Activated naive CD4-positive, alpha-beta T cell treated with anti-CD3 and anti-CD28 coated beads for 36 hours (primary cell): ENCODE measurements at regions of chr6 and their contacts with region 1.

Region 1: DNA sequence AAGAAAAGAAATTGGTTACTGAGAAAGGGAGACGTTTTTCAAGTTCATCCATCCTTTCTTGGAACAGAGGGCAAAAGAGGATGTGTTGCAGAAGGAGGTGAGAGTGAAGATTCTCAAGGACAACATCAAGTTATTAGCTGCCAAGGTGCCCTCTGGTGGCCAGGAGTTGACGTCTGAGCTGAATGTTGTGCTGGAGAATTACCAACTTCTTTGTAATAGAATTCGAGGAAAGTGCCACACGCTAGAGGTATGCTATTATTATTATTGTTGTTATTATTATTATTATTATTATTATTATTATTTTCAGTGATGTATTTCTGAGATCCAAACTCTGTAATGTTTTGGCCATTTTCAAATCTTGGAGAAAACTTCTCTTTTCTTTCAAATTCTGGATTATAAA is 197.0 kb downstream of the UTRN start:
- DNase-seq: peak; percentile 88
- H3K4me3 Mint-ChIP-seq: no peak overlapping the region
- H3K27ac Mint-ChIP-seq: no peak overlapping the region
- H3K4me1 Mint-ChIP-seq: peaks cover 3% of the 10 kb centered on the region
- H3K27me3 Mint-ChIP-seq: no peaks in the 10 kb centered on the region

Region 2: DNA sequence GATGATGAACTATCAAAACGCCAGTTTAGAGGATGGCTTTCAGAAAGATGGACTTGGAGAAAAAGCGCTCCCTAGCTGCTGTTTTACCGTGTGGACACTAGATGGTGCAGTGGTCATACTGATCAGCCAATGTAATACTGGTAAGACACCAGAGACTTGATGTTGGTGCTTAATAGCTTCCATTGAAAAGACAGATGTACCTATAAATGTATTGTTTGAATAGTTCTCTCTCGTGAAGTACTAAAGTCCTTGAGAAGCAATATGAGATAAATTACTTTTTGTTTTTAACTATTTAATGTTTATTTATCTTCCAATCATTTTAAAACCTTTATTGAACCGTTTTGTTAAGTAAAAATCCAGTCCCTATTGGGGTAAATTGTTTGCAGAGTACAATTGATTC is 906.7 kb before region 1 on chr6:
- CTCF ChIA-PET with region 1: no interaction called
- intact Hi-C with region 1: loop called (anchors 10 kb)
- DNase-seq: peak; percentile 69
- H3K4me3 Mint-ChIP-seq: no peak overlapping the region
- H3K27ac Mint-ChIP-seq: no peak overlapping the region
- H3K4me1 Mint-ChIP-seq: no peaks in the 10 kb centered on the region
- H3K27me3 Mint-ChIP-seq: no peaks in the 10 kb centered on the region

Region 3: GRCh38 chr6:144264270-144265060 is 217.7 kb before region 1 on chr6:
- CTCF ChIA-PET with region 1: interaction called, 7 read pairs
- intact Hi-C with region 1: loop called (anchors 1 kb)
- DNase-seq: no peak
- H3K4me3 Mint-ChIP-seq: no peak overlapping the region
- H3K27ac Mint-ChIP-seq: no peak overlapping the region
- H3K4me1 Mint-ChIP-seq: no peaks in the 10 kb centered on the region
- H3K27me3 Mint-ChIP-seq: no peaks in the 10 kb centered on the region

Region 4: GRCh38 chr6:144321839-144322591 is 160.1 kb before region 1 on chr6:
- CTCF ChIA-PET with region 1: no interaction called
- intact Hi-C with region 1: no loop called
- DNase-seq: no peak
- H3K4me3 Mint-ChIP-seq: no peak overlapping the region
- H3K27ac Mint-ChIP-seq: no peak overlapping the region
- H3K4me1 Mint-ChIP-seq: peaks cover 10% of the 10 kb centered on the region
- H3K27me3 Mint-ChIP-seq: no peaks in the 10 kb centered on the region

Region 5: DNA sequence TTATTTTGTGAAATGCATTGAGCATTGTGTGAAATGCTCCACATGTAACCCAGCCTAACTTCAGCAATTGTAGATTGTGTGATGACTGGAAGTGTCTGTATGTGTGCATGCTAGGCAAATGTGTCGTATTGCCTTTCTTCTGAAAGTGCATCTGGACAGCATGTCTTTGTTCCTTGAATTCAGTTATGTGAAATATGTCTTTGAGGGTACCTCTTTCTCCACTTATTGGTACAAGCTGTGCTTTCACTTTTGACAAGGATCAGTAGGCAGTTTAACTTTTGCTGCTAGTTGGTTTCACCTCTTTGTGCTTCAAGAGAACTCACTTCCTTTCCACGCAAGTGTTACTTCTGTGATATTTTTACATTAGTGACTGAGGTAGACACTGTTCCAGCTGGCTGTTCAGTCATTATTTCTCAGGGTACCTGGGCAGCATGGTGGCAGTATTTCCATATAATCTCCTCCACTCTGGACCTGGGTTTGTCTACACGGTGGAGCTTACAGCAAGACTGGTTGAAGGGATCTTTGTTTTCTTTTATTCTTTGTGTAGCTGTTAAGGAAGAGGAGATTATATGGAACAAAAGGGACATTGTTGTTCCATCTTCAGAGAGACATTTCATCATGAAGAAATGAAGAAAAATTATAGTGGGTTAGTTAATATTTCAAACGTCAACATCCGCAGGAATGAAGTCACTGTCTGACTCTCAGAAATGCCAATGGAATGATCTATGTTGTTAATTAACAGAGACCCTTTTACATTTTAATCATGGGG is 21.6 kb before region 1 on chr6:
- CTCF ChIA-PET with region 1: interaction called, 23 read pairs
- intact Hi-C with region 1: loop called (anchors 1 kb)
- DNase-seq: peak; percentile 37
- H3K4me3 Mint-ChIP-seq: no peak overlapping the region
- H3K27ac Mint-ChIP-seq: peak overlapping the region; percentile 20
- H3K4me1 Mint-ChIP-seq: peaks cover 16% of the 10 kb centered on the region
- H3K27me3 Mint-ChIP-seq: no peaks in the 10 kb centered on the region

Region 6: GRCh38 chr6:144493035-144493910 is 11.1 kb after region 1 on chr6:
- CTCF ChIA-PET with region 1: interaction called, 15 read pairs
- intact Hi-C with region 1: no loop called
- DNase-seq: no peak
- H3K4me3 Mint-ChIP-seq: no peak overlapping the region
- H3K27ac Mint-ChIP-seq: no peak overlapping the region
- H3K4me1 Mint-ChIP-seq: peaks cover 8% of the 10 kb centered on the region
- H3K27me3 Mint-ChIP-seq: no peaks in the 10 kb centered on the region